H1 (cell line): ENCODE measurements at regions of chr5 and their contacts with region 1.

Region 1: DNA sequence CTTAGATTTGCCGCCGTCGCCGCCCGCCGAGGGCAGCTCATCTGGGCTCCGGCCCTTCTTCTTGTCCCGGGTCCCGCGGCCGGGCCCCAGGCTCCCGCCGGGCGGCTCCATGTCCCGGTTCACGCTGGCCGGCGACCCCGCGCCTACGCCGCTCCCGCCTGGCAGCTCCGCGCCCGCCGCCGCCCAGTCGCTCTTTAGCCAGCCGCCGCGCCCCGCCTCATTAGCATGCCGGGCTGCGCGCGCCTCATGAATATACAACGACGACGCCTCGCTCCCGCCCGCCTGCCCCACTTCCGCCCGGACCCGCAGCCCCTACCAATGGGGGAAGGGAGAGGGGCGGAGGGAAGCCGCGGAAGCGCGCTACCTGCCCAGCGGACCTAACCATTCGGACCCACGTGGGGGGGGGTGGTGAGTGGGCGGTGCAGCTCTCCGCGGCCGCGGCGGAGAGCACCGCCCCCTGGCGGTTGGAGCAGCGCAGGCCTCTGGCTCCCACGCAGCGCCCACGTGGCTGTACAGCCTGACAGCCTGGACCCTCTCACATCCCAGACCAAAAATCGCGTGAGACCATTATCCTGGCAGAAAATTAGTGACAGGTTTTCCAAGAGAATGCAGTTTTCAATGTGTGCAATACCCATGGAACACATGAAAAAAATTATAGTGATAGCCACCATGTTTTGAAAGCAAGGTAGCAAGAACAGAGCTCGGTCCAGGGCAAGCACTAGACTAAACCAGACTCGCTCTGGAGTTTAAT is at the start of gene DIAPH1:
- DNase-seq: peak; percentile 92 to 94
- H3K4me3 ChIP-seq: peak within 1 kb of the TSS; percentile 74 to 97 (median 84)
- H3K27ac ChIP-seq: peak within 1 kb of the TSS; percentile 77
- H3K4me1 ChIP-seq: peaks cover 2 to 7% (median 4%) of the 10 kb centered on the region in 4 experiments; a peak in 3 of 7 replicates
- H3K27me3 ChIP-seq: no peaks in the 10 kb centered on the region
- CTCF ChIP-seq: peak; percentile 83 to 97 (median 87)
- EP300 ChIP-seq: peak in 1 of 2 experiments; percentile 99; a peak in 2 of 3 replicates
- POLR2A ChIP-seq: peak in 1 of 2 experiments; percentile 74; a peak in 1 of 3 replicates
- RAD21 ChIP-seq: peak; percentile 63 to 74
- total RNA-seq, gene DIAPH1: 107 and 114 TPM in 2 replicates

Region 2: GRCh38 chr5:141330299-141331080 is 288.5 kb before region 1 on chr5 and contains the start of gene PCDHGA1:
- CTCF ChIA-PET with region 1: no interaction called
- POLR2A ChIA-PET with region 1: no interaction called
- DNase-seq: no peak
- H3K4me3 ChIP-seq: no peak within 1 kb of the TSS
- H3K27ac ChIP-seq: no peak within 1 kb of the TSS
- H3K4me1 ChIP-seq: no peaks in the 10 kb centered on the region
- H3K27me3 ChIP-seq: no peaks in the 10 kb centered on the region
- CTCF ChIP-seq: peak in 2 of 3 experiments; percentile 17 to 25; a peak in 2 of 4 replicates
- EP300 ChIP-seq: no peak
- POLR2A ChIP-seq: no peak
- RAD21 ChIP-seq: peak; percentile 7 to 29; a peak in 2 of 4 replicates
- total RNA-seq, gene PCDHGA1: 0.84 and 0.89 TPM in 2 replicates

Region 3: GRCh38 chr5:141590127-141590526 is 28.9 kb before region 1 on chr5:
- CTCF ChIA-PET with region 1: interaction called, 150 read pairs
- POLR2A ChIA-PET with region 1: interaction called, 31 read pairs
- DNase-seq: no peak
- H3K4me3 ChIP-seq: no peak overlapping the region
- H3K27ac ChIP-seq: no peak overlapping the region
- H3K4me1 ChIP-seq: no peaks in the 10 kb centered on the region
- H3K27me3 ChIP-seq: no peaks in the 10 kb centered on the region
- CTCF ChIP-seq: no peak
- EP300 ChIP-seq: no peak
- POLR2A ChIP-seq: no peak
- RAD21 ChIP-seq: no peak

Region 4: DNA sequence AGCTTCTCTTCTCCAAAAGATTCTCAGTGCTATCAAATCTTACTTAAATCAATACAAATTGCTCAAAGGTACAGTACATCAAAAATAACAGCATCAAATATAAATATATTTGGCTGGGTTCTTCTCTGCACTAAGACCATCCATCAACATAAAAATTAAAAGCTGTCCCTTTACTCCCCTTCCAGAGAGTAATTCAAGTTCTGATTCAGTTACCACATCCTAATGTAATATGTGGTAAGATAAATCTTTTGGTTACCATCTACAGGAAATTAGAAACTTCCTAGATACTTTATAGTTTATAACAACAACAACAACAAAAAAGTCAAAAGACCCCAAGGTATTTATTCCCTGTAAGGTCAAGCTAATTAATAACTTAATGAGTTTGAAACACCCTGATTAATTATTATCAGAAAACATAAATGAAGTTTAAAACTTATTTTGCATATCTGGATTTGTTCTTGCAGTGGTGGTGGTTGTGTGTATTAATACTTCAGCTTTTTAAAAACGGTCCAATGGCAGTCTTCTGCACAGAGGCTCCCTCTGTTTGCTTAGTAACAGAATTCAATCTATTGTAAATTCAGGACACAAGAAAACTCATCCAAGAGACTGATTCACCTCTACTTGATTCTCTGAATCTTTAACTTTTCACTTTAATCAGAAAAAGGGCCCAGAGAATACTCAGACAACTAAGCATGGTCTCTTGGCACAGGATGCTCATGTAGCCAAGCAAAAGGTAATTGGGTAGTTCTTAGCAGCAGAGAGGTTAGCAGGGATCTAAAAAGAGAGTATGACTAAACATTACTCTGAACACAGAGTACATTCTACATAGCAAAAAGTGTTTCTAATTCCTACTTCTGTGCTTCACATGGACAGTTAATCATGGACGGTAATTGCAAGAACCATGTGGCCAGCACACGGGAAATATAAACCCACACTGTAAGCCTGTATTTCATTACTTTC is 20.3 kb before region 1 on chr5:
- CTCF ChIA-PET with region 1: interaction called, 150 read pairs
- POLR2A ChIA-PET with region 1: interaction called, 55 read pairs
- DNase-seq: no peak
- H3K4me3 ChIP-seq: no peak overlapping the region
- H3K27ac ChIP-seq: no peak overlapping the region
- H3K4me1 ChIP-seq: no peaks in the 10 kb centered on the region; a peak in 1 of 7 replicates
- H3K27me3 ChIP-seq: no peaks in the 10 kb centered on the region
- CTCF ChIP-seq: no peak
- EP300 ChIP-seq: no peak
- POLR2A ChIP-seq: no peak
- RAD21 ChIP-seq: no peak

Region 5: DNA sequence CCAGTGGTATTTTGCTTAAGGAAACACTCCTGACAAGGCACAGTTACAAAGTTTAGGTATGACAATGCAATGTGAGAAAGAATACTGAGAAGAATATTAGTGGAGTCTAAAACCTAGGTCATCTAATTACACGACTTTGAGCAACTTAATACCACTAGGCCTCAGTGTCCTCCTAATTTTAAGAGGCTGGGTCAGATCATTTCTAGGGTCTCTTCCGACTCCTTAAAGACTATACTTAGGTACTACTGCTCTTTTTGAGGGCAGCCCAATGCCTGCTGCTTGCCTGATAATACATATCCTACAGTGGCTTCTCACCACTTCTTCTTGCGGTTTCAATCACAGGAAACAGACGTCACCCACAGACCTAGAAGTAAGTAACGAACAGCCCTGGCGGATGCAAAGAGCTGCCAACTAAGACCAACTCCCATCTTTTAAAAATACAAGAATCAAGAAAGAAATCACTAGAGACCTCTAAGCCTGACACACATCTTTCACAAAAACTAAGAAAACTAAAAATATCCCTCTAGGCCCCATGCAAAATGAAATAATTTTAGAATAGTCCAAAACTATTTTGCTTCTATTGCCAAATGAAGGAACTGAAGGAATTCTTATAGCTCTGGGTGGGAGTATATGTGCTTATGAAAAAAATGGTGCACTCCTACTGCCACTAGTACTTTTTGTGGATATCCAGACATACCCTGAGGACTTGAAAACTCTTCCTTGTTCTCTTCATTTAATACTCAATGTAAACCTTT is 13.3 kb before region 1 on chr5:
- CTCF ChIA-PET with region 1: interaction called, 19 read pairs
- POLR2A ChIA-PET with region 1: interaction called, 55 read pairs
- DNase-seq: no peak
- H3K4me3 ChIP-seq: no peak overlapping the region
- H3K27ac ChIP-seq: no peak overlapping the region
- H3K4me1 ChIP-seq: no peaks in the 10 kb centered on the region; a peak in 1 of 7 replicates
- H3K27me3 ChIP-seq: no peaks in the 10 kb centered on the region
- CTCF ChIP-seq: no peak
- EP300 ChIP-seq: no peak
- POLR2A ChIP-seq: no peak
- RAD21 ChIP-seq: no peak

Region 6: GRCh38 chr5:141681695-141682641 is 63.0 kb after region 1 on chr5 and contains the start of gene ARAP3:
- CTCF ChIA-PET with region 1: no interaction called
- POLR2A ChIA-PET with region 1: no interaction called
- DNase-seq: peak in 1 of 2 experiments; percentile 88
- H3K4me3 ChIP-seq: peak within 1 kb of the TSS; percentile 60 to 73 (median 67)
- H3K27ac ChIP-seq: peak within 1 kb of the TSS; percentile 37; the same call in 1 of the 2 replicates
- H3K4me1 ChIP-seq: peaks cover 10 to 29% (median 20%) of the 10 kb centered on the region in 4 experiments
- H3K27me3 ChIP-seq: no peaks in the 10 kb centered on the region
- CTCF ChIP-seq: no peak
- EP300 ChIP-seq: no peak
- POLR2A ChIP-seq: no peak
- RAD21 ChIP-seq: no peak
- total RNA-seq, gene ARAP3: 45.7 and 48.6 TPM in 2 replicates

Region 7: GRCh38 chr5:141729387-141730006 is 110.5 kb after region 1 on chr5:
- CTCF ChIA-PET with region 1: no interaction called
- POLR2A ChIA-PET with region 1: no interaction called
- DNase-seq: no peak
- H3K4me3 ChIP-seq: no peak overlapping the region
- H3K27ac ChIP-seq: no peak overlapping the region
- H3K4me1 ChIP-seq: peaks cover 1 to 11% (median 8%) of the 10 kb centered on the region in 4 experiments; a peak in 3 of 7 replicates
- H3K27me3 ChIP-seq: no peaks in the 10 kb centered on the region
- CTCF ChIP-seq: no peak
- EP300 ChIP-seq: no peak
- POLR2A ChIP-seq: no peak
- RAD21 ChIP-seq: no peak

Region 8: GRCh38 chr5:141771031-141771430 is 152.1 kb after region 1 on chr5:
- CTCF ChIA-PET with region 1: no interaction called
- POLR2A ChIA-PET with region 1: no interaction called
- DNase-seq: no peak
- H3K4me3 ChIP-seq: no peak overlapping the region
- H3K27ac ChIP-seq: no peak overlapping the region
- H3K4me1 ChIP-seq: peaks cover 0 to 7% (median 3%) of the 10 kb centered on the region in 4 experiments; a peak in 5 of 7 replicates
- H3K27me3 ChIP-seq: no peaks in the 10 kb centered on the region; a peak in 1 of 7 replicates
- CTCF ChIP-seq: no peak
- EP300 ChIP-seq: no peak
- POLR2A ChIP-seq: no peak
- RAD21 ChIP-seq: no peak